ENCODE measurements at regions of chr17 and their contacts with region 1.

Region 1: GRCh38 chr17:29732613-29733012 is 109.9 kb upstream of the CORO6 start:
- DNase-seq: no peak
- H3K4me3 ChIP-seq: no peak overlapping the region
- H3K4me3 Mint-ChIP-seq: no peak overlapping the region
- H3K27ac ChIP-seq: peak overlapping the region in 1 of 2 donors; percentile 65
- H3K27ac Mint-ChIP-seq: peak overlapping the region in 5 of 7 donors; percentile 19 to 78 (median 66)
- H3K4me1 ChIP-seq: peaks cover 19 to 32% of the 10 kb centered on the region in 2 donors
- H3K4me1 Mint-ChIP-seq: peaks cover 43% of the 10 kb centered on the region
- H3K27me3 ChIP-seq: no peaks in the 10 kb centered on the region
- H3K27me3 Mint-ChIP-seq: no peaks in the 10 kb centered on the region
- CTCF ChIP-seq: no peak

Region 2: DNA sequence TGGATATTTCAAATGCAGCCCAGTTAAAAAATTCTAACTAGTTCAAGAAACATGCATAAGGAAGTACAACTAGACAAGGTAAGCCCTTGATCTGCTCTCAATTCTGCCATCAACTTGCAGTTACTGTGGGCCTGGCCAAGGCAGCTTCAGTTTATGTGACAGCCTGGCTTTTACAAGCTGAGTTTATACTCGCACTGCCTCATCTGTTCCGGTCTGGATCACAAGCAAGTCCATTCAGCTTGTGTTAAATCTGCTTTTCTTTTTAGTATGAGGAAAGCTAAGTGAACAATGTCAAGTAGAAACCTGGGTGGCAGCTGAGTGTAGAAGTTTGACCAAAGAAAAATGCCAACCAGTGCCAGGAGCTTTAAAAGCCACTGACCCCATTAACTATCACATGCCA is 33.3 kb before region 1 on chr17:
- intact Hi-C with region 1: loop called in 1 of 2 experiments (anchors 5 kb)
- DNase-seq: no peak
- H3K4me3 ChIP-seq: no peak overlapping the region
- H3K4me3 Mint-ChIP-seq: no peak overlapping the region
- H3K27ac ChIP-seq: peak overlapping the region in 1 of 2 donors; percentile 72
- H3K27ac Mint-ChIP-seq: peak overlapping the region in 6 of 7 donors; percentile 25 to 88 (median 62)
- H3K4me1 ChIP-seq: peaks cover 26 to 44% of the 10 kb centered on the region in 2 donors
- H3K4me1 Mint-ChIP-seq: peaks cover 39% of the 10 kb centered on the region
- H3K27me3 ChIP-seq: no peaks in the 10 kb centered on the region
- H3K27me3 Mint-ChIP-seq: no peaks in the 10 kb centered on the region
- CTCF ChIP-seq: no peak

Region 3: GRCh38 chr17:29777663-29778062 is 45.0 kb after region 1 on chr17:
- intact Hi-C with region 1: no loop called
- DNase-seq: no peak
- H3K4me3 ChIP-seq: no peak overlapping the region
- H3K4me3 Mint-ChIP-seq: no peak overlapping the region
- H3K27ac ChIP-seq: no peak overlapping the region
- H3K27ac Mint-ChIP-seq: peak overlapping the region in 1 of 7 donors; percentile 70
- H3K4me1 ChIP-seq: peaks cover 5 to 7% of the 10 kb centered on the region in 2 donors
- H3K4me1 Mint-ChIP-seq: peaks cover 13% of the 10 kb centered on the region
- H3K27me3 ChIP-seq: no peaks in the 10 kb centered on the region
- H3K27me3 Mint-ChIP-seq: peaks cover 0 to 4% (median 0%) of the 10 kb centered on the region in 3 donors
- CTCF ChIP-seq: no peak

Region 4: DNA sequence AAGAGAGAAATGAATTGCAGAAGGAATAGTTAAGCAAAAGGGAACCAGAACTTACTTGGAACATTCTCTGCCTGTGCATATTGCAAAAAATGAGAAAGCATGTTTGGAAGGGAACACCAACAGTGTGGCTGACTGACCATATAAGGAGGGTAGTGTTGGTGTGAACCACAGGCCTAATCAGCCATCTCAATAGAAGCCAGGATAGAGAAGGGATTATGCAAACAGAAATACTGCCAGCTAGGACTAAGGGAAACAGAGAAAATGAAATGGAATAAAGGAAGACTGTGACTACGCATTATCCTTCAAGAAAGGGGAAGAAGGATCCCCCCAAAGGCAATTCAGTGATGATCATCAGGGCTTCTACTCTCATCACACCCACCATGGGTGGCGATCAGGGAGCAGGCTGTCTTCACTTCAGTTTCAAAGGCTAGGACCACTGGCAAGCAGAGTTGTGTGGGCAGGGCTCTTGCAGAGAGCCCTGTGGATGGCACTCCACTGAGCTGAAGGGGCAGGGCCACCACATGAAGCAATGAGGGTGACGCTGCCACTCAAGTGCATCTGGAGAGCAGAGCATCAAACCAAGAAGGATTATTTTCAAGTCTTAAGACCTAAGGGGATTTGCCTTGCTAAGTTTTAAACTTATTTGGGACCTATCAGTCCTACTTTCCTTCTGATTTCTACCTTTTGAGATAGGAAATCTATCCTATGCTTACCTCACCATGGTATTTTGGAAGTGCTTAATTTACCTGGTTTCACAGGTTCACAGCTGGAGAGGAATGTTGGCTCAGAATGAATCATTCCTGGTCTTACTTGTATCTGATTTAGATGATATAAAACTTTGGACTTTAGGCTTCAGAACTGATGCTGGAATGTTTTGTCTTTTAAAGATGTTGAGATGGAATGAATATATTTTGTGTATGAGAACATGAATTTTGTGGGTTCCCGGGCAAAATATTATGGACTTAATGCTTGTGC is 56.9 kb after region 1 on chr17:
- intact Hi-C with region 1: no loop called
- DNase-seq: peak in 2 of 3 donors; percentile 7 to 10
- H3K4me3 ChIP-seq: no peak overlapping the region
- H3K4me3 Mint-ChIP-seq: peak overlapping the region in 1 of 2 donors; percentile 18
- H3K27ac ChIP-seq: peak overlapping the region; percentile 57 to 66
- H3K27ac Mint-ChIP-seq: peak overlapping the region; percentile 30 to 87 (median 84)
- H3K4me1 ChIP-seq: peaks cover 21 to 27% of the 10 kb centered on the region in 2 donors
- H3K4me1 Mint-ChIP-seq: peaks cover 30% of the 10 kb centered on the region
- H3K27me3 ChIP-seq: no peaks in the 10 kb centered on the region
- H3K27me3 Mint-ChIP-seq: no peaks in the 10 kb centered on the region
- CTCF ChIP-seq: no peak

Region 5: GRCh38 chr17:29838961-29839360 is 106.3 kb after region 1 on chr17:
- intact Hi-C with region 1: no loop called
- DNase-seq: peak in 1 of 3 donors; percentile 23
- H3K4me3 ChIP-seq: no peak overlapping the region
- H3K4me3 Mint-ChIP-seq: no peak overlapping the region
- H3K27ac ChIP-seq: no peak overlapping the region
- H3K27ac Mint-ChIP-seq: peak overlapping the region in 1 of 7 donors; percentile 71
- H3K4me1 ChIP-seq: peaks cover 25 to 28% of the 10 kb centered on the region in 2 donors
- H3K4me1 Mint-ChIP-seq: peaks cover 31% of the 10 kb centered on the region
- H3K27me3 ChIP-seq: no peaks in the 10 kb centered on the region
- H3K27me3 Mint-ChIP-seq: peaks cover 0 to 2% (median 0%) of the 10 kb centered on the region in 3 donors
- CTCF ChIP-seq: no peak

Region 6: GRCh38 chr17:29883497-29883896 is 150.9 kb after region 1 on chr17:
- intact Hi-C with region 1: no loop called
- DNase-seq: no peak
- H3K4me3 ChIP-seq: no peak overlapping the region
- H3K4me3 Mint-ChIP-seq: no peak overlapping the region
- H3K27ac ChIP-seq: no peak overlapping the region
- H3K27ac Mint-ChIP-seq: peak overlapping the region in 1 of 7 donors; percentile 68
- H3K4me1 ChIP-seq: peaks cover 21 to 24% of the 10 kb centered on the region in 2 donors
- H3K4me1 Mint-ChIP-seq: peaks cover 31% of the 10 kb centered on the region
- H3K27me3 ChIP-seq: no peaks in the 10 kb centered on the region
- H3K27me3 Mint-ChIP-seq: no peaks in the 10 kb centered on the region
- CTCF ChIP-seq: no peak